ENCODE measurements at regions of chr6 and their contacts with region 1.

Region 1: GRCh38 chr6:73520688-73521350 is at the start of gene EEF1A1:
- DNase-seq: peak; percentile 99
- total RNA-seq, gene EEF1A1: 2,432 TPM

Region 2: GRCh38 chr6:73262671-73263569 is 257.9 kb before region 1 on chr6 and contains the start of gene KHDC1:
- intact Hi-C with region 1: no loop called
- DNase-seq: no peak
- total RNA-seq, gene KHDC1: 1.1 TPM

Region 3: DNA sequence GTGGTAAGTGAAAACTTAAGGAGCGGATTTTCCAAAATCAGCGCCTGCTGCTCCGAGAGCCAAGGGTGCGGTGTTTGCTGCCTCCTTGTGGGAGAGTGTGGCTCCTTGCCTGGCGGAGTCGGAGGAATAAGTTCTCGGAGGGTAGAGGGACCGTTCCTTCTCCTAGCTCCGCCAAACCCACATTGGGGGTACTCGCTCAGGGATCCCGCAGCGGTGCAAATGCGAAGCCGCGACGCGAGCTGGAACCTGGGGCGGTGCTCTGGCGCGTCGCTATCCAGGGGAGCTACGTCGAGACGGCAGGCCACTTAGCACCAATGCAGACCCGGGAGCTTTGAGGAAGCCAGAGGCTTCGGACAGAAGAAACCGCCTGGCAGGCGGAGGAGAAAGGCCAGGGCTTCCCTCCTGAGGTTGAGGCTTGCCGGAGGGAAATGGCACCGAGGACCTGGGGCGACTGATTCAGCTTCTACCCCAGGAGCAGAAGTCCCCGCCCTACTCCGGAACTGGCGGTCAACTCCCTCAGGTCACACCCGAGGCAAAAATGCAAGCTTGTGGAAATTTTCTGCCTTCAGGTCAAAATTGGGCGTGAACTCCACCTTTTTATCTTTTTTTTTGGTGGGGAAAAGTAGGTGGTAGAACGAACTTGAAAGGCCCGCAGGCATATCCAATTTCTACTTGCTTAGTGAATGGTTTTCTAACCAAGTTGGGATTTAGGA is 131.9 kb before region 1 on chr6:
- intact Hi-C with region 1: no loop called
- DNase-seq: peak; percentile 82

Region 4: GRCh38 chr6:73461537-73462350 is 59.1 kb before region 1 on chr6 and contains the start of gene MTO1:
- intact Hi-C with region 1: loop called (anchors 5 kb)
- DNase-seq: peak; percentile 95
- total RNA-seq, gene MTO1: 20.7 TPM

Region 5: DNA sequence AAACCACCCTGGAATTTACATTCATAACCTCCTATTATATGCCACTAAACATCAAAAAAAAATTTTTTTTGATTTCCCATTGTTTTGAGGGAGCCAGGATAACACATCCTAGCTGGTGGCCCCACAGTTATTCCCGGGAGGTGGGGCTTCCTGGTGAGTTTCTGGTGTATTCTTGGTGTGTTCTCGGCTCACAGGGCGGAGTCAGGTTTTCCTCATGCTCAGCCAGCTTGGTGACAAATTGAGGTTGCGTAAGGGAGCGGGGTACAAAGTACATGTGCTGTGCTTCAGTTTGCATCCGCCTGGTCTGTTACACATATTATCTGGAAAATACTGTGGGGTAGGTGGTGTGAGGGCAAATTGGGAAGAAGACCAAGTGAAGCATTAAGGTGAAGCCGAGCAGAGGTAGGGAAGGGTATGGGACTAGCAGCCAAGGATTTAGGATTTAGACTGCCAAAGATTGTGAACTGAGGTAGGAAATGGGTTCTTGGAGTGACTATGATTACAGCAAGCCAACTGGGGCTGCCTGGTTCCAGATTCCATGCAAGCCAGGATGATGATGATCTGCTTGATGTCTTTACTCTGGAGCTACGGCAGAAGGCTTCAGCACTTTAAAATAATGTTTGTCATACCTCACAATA is 46.3 kb after region 1 on chr6:
- intact Hi-C with region 1: loop called (anchors 5 kb)
- DNase-seq: peak; percentile 77

Region 6: DNA sequence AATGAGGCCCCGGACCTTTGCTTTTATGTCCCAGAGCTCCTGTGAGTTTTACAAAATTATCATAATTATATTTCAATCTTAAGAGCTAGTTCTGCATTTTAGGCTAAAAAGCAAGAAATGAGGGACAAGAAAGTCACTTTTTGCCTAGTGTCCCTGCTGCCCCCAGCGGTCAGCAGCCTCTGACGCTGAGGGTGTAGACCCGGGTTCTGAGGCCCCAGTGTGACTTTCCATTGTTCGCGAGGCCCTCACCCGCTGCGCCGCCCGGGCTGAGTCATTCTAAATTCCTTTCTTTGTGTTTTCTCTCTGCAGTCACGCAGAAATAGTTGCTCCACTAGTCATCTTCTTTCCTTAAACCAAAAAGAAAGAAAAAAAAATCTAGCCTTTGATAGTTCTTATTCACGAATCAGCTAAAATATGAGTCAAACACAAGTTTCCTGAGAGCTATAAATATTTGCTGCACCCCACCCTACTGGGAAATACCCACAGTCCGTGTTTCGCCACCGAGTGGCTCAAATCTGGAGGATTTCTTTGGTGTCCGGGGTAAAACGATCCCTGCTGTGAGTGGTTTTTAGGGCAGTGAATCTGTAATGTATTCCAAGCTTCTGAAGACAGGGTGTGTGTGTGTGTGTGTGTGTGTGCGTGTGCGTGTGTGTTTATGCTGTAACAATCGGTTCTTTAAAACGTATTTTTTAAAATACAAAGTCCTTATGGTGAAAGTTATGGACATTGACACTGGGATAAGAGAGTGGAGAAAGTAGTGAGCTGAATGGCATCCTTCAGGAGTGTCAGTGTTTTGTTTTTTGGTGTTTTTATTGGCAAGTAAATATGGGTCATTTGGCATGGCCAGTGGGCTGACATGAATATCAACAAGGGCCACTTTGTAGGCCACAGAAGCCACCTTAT is 59.7 kb after region 1 on chr6:
- intact Hi-C with region 1: loop called (anchors 1 kb)
- DNase-seq: peak; percentile 90

Region 7: DNA sequence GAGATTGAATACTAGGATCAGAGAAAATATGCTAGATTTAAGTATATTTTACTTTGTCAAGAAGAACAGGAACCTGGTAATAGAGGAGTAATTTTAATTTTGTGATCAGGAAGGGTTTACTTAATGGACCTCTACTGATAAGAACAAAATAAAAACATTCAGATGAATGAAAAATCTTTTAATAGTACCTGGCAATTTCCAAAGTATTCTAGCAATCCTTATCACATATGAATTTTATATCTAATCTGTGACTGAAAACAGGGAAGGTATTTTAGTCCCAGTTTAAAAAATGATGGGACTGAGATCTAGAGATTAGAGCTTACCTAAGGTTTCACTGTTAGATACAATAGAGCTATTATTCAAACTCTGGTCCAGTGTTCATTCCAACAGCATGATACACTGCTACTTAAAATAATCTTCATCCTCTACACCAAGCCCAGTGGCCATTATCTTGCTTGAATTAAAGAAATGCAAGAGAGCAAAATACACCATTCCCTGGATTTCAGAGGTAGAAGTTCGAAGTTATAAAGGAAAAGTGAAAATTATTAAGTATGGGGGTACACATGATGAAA is 119.4 kb after region 1 on chr6:
- intact Hi-C with region 1: no loop called
- DNase-seq: no peak

Region 8: GRCh38 chr6:73653571-73654424 is 133.0 kb after region 1 on chr6 and contains the start of gene SLC17A5:
- intact Hi-C with region 1: loop called (anchors 2 kb)
- DNase-seq: peak; percentile 98
- total RNA-seq, gene SLC17A5: 7.3 TPM